Calu3 (cell line): ENCODE measurements at regions of chr11 and their contacts with region 1.

Region 1: DNA sequence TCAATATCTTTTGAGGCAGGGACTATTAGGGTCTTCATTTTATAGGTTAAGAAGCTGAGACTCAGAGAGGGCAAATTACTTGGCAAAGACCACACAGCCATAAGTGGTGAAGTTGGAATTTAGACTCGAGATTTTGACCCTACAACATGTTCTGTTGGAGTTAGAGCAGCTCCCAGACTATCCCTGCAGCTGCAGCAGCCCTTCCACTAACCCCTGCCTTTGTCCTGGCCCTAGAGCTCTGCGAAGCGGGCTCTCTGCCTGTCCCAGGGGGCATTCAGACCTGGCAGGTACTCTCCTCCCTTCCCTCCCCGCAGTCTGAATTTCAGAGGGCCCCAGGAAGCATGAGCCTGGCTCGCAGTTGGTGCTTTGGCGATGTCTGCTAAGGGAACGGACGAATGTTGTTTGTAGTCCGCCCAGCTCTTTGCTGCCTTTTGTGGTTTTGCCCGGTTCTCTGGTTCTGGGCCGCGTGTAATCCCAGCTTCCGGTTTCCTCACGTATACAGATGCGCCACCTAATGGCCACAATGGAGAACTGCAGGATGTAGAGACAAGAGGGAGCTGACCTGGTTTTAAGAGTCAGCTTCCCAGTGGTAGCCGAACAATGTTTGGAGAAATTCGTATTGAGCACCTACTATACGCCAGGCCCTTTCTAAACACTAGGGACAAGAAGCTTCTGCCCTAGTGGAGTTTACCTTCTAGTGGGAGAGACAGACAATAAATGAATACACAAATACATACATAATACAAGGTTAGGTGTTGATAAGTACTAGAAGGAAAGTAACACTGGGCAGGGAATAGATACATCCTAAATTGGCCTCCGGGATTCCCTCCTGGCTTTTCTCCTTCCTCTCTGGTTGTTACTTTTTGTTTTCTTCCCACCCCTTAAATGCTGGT is 125.2 kb downstream of the ST3GAL4 start:
- DNase-seq: peak; percentile 62
- H3K4me3 Mint-ChIP-seq: no peak overlapping the region
- H3K27ac Mint-ChIP-seq: peak overlapping the region; percentile 71
- H3K4me1 Mint-ChIP-seq: peaks cover 17% of the 10 kb centered on the region
- H3K27me3 Mint-ChIP-seq: no peaks in the 10 kb centered on the region
- CTCF ChIP-seq: peak; percentile 62

Region 2: GRCh38 chr11:126440792-126441514 is 39.7 kb before region 1 on chr11:
- CTCF ChIA-PET with region 1: interaction called, 16 read pairs
- intact Hi-C with region 1: loop called (anchors 2 kb)
- DNase-seq: peak; percentile 81
- H3K4me3 Mint-ChIP-seq: no peak overlapping the region
- H3K27ac Mint-ChIP-seq: no peak overlapping the region
- H3K4me1 Mint-ChIP-seq: no peaks in the 10 kb centered on the region
- H3K27me3 Mint-ChIP-seq: peaks cover 4% of the 10 kb centered on the region
- CTCF ChIP-seq: peak; percentile 82